Naive thymus-derived CD4-positive, alpha-beta T cell (primary cell): ENCODE measurements at regions of chr11 and their contacts with region 1.

Region 1: DNA sequence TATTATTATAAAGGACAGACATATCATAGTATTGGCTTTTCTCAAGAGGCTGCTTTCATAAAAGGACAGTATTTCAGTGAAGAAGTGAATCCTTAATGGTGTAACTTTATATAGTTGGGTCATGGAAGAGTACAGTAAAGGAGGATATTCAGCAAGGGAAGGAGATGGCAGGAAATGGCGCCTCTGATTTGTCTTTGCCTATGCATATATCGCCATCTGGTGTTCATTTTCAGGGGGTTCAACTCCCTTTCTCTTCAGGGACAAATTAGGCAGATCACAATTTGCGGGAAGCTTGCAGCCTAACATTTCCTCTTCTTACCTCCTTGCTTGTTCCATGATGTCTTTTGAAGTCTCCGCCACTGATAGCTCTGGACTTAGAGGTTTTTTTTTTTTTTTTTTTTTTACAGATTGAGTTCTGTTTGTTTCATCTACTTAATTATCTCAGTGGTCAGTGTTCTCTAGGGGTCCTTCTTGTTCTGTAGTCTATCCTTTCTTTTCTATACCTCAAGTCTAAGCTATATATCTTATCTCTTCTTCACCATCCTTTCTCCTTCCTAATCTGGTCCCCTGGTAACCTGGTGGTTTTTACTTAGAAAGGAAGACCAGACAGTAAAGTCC is 21.8 kb upstream of the RRM1 start:
- DNase-seq: peak in 7 of 9 donors; percentile 58 to 80 (median 75)
- ATAC-seq: peak; percentile 90
- H3K4me3 ChIP-seq: no peak overlapping the region
- H3K4me3 Mint-ChIP-seq: no peak overlapping the region
- H3K27ac ChIP-seq: peak overlapping the region; percentile 55
- H3K27ac Mint-ChIP-seq: peak overlapping the region; percentile 7 to 92 (median 85)
- H3K4me1 ChIP-seq: peaks cover 8 to 25% of the 10 kb centered on the region in 2 donors
- H3K4me1 Mint-ChIP-seq: peaks cover 32 to 78% (median 74%) of the 10 kb centered on the region in 7 donors
- H3K27me3 ChIP-seq: no peaks in the 10 kb centered on the region
- H3K27me3 Mint-ChIP-seq: no peaks in the 10 kb centered on the region

Region 2: DNA sequence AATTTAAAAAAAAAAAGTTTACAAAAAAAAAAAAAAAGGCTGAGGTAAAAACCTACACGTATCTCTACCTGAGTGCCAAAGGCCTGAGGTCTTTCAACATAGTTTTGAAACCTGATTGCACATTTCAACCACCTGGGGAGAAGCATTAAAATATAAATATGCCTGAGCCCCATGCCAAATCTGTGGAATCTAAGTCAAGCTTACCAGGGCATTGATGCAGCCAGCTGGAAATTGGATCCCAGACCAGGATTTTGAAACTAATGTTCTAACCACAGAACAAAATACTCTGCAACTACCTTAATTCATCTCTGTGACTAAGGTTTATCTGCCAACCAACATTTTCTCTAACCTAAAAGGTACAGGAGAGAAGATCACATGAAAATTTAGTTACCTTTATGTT is 362.8 kb before region 1 on chr11:
- CTCF ChIA-PET with region 1: no interaction called
- POLR2A ChIA-PET with region 1: no interaction called
- intact Hi-C with region 1: loop called in 1 of 2 experiments (anchors 5 kb)
- DNase-seq: no peak
- ATAC-seq: no peak
- H3K4me3 ChIP-seq: no peak overlapping the region
- H3K4me3 Mint-ChIP-seq: no peak overlapping the region
- H3K27ac ChIP-seq: no peak overlapping the region
- H3K27ac Mint-ChIP-seq: peak overlapping the region in 1 of 9 donors; percentile 13
- H3K4me1 ChIP-seq: no peaks in the 10 kb centered on the region
- H3K4me1 Mint-ChIP-seq: peaks cover 0 to 5% (median 0%) of the 10 kb centered on the region in 7 donors
- H3K27me3 ChIP-seq: no peaks in the 10 kb centered on the region
- H3K27me3 Mint-ChIP-seq: no peaks in the 10 kb centered on the region

Region 3: DNA sequence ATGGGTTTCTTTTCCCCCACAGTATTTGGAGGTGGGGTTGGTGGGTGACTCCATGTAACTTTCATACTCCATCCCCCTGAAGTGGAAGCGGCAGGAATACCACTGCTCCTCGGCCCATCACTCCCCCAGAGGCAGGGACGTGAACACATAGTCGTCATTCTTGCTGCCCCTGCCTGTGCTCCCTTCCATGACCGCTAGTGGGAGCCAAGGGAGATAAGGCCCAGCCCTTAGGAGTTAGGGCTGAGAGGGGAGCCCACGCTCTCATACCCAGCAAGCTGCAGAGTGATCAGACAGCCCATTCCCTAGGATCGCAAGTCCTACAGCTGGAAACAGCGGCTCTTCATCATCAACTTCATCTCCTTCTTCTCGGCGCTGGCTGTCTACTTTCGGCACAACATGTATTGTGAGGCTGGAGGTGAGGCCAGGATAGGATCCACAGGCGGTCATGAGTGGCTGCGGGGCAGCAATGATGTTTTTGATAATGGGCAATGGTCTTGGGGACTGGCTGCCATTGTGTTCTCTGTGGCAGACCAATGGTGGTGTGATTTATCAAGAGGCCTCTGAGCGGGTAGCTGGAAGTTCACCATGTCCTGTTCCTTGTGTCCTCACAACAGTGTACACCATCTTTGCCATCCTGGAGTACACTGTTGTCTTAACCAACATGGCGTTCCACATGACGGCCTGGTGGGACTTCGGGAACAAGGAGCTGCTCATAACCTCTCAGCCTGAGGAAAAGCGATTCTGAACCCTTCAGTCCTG is 247.9 kb before region 1 on chr11:
- CTCF ChIA-PET with region 1: interaction called, 7 read pairs
- POLR2A ChIA-PET with region 1: no interaction called
- intact Hi-C with region 1: loop called (anchors 1 kb)
- DNase-seq: peak; percentile 65 to 83 (median 77)
- ATAC-seq: peak; percentile 97
- H3K4me3 ChIP-seq: no peak overlapping the region
- H3K4me3 Mint-ChIP-seq: no peak overlapping the region
- H3K27ac ChIP-seq: peak overlapping the region; percentile 38
- H3K27ac Mint-ChIP-seq: peak overlapping the region; percentile 60 to 96 (median 87)
- H3K4me1 ChIP-seq: peaks cover 13 to 14% of the 10 kb centered on the region in 2 donors
- H3K4me1 Mint-ChIP-seq: peaks cover 15 to 46% (median 44%) of the 10 kb centered on the region in 7 donors
- H3K27me3 ChIP-seq: no peaks in the 10 kb centered on the region
- H3K27me3 Mint-ChIP-seq: no peaks in the 10 kb centered on the region

Region 4: GRCh38 chr11:3854977-3855807 is 217.6 kb before region 1 on chr11 and contains the start of gene STIM1:
- CTCF ChIA-PET with region 1: interaction called, 164 read pairs
- POLR2A ChIA-PET with region 1: interaction called, 110 read pairs
- intact Hi-C with region 1: loop called (anchors 1 kb)
- DNase-seq: peak; percentile 94 to 99 (median 97)
- ATAC-seq: peak; percentile 89
- H3K4me3 ChIP-seq: peak within 1 kb of the TSS; percentile 87
- H3K4me3 Mint-ChIP-seq: peak within 1 kb of the TSS; percentile 86 to 98 (median 92)
- H3K27ac ChIP-seq: peak within 1 kb of the TSS; percentile 92
- H3K27ac Mint-ChIP-seq: peak within 1 kb of the TSS; percentile 93 to 100 (median 98)
- H3K4me1 ChIP-seq: peaks cover 49 to 57% of the 10 kb centered on the region in 2 donors
- H3K4me1 Mint-ChIP-seq: peaks cover 53 to 72% (median 61%) of the 10 kb centered on the region in 7 donors
- H3K27me3 ChIP-seq: no peaks in the 10 kb centered on the region
- H3K27me3 Mint-ChIP-seq: peaks cover 0 to 2% (median 0%) of the 10 kb centered on the region in 5 donors
- total RNA-seq, gene STIM1: 95.6 to 117 (median 103) TPM

Region 5: DNA sequence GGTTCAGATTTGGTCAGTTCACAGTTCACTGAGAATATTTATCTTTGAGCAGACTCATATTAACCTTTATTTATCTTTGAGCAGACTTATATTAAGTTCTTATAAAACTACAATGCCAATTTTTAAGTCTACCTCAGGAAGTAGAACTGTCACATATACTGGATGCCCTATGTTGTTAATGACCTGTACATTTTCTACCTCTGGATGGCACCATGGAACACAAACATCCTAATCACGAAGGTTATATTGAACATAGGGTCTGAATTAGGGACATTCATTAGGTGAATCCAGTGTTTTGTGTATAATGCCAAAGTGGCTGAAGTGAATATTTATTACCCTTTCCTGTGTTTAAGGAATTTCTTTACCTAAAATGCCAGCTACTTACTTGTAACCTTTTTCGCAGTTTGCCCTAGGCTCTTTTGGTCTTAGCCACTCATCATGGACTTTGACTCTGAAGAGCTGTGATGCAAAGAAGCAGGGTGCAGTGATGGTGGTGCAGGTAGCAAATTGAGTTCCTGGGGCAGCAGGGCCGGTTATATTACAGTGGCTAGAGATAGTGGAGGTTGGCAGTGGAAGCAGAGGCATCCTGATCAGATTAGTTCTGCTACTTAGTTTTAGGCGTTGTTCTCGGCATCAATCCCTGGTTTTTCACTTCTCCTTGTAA is 145.5 kb before region 1 on chr11:
- CTCF ChIA-PET with region 1: interaction called, 15 read pairs
- POLR2A ChIA-PET with region 1: interaction called, 8 read pairs
- intact Hi-C with region 1: loop called in 1 of 2 experiments (anchors 1 kb)
- DNase-seq: no peak
- ATAC-seq: no peak
- H3K4me3 ChIP-seq: no peak overlapping the region
- H3K4me3 Mint-ChIP-seq: no peak overlapping the region
- H3K27ac ChIP-seq: no peak overlapping the region
- H3K27ac Mint-ChIP-seq: peak overlapping the region in 7 of 9 donors; percentile 10 to 86 (median 52)
- H3K4me1 ChIP-seq: peaks cover 0 to 4% of the 10 kb centered on the region in 2 donors
- H3K4me1 Mint-ChIP-seq: peaks cover 23 to 61% (median 58%) of the 10 kb centered on the region in 7 donors
- H3K27me3 ChIP-seq: no peaks in the 10 kb centered on the region
- H3K27me3 Mint-ChIP-seq: no peaks in the 10 kb centered on the region

Region 6: DNA sequence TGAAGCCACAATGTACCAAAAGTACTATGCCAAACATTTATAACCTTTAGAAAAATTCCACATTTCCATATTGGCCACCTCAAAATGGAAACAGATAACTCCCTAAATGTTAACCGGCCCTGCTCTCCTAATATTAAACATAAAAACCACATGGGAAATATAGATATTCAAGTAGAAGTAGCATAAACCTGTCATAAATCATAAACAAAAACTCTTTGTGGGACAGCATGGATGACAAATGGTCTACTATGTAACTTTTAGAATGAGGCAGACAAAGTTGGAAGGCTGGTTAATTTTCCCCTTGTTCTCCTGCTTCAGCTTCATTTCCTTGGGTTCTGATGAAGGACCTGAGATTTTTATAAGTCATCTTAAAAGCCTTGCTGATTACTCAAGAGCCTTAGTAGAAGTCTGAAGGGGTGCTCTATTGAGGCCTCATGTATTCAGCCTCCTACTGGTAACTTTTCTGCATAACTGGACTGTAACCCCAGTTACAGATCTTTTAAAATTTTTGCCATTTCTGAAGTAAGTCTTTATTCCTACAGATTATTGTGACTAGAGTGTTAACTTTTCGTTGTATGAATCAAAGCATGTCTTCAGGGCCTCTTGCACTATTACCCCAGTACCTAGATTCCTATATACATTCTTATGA is 100.9 kb before region 1 on chr11:
- CTCF ChIA-PET with region 1: interaction called, 9 read pairs
- POLR2A ChIA-PET with region 1: interaction called, 13 read pairs
- intact Hi-C with region 1: no loop called
- DNase-seq: no peak
- ATAC-seq: peak; percentile 41
- H3K4me3 ChIP-seq: no peak overlapping the region
- H3K4me3 Mint-ChIP-seq: peak overlapping the region in 1 of 10 donors; percentile 5
- H3K27ac ChIP-seq: no peak overlapping the region
- H3K27ac Mint-ChIP-seq: peak overlapping the region in 6 of 9 donors; percentile 39 to 88 (median 53)
- H3K4me1 ChIP-seq: peaks cover 10 to 28% of the 10 kb centered on the region in 2 donors
- H3K4me1 Mint-ChIP-seq: peaks cover 35 to 89% (median 81%) of the 10 kb centered on the region in 7 donors
- H3K27me3 ChIP-seq: no peaks in the 10 kb centered on the region
- H3K27me3 Mint-ChIP-seq: no peaks in the 10 kb centered on the region

Region 7: GRCh38 chr11:4084406-4085125 is 11.8 kb after region 1 on chr11:
- CTCF ChIA-PET with region 1: interaction called, 15 read pairs
- POLR2A ChIA-PET with region 1: interaction called, 4 read pairs
- intact Hi-C with region 1: no loop called
- DNase-seq: no peak
- ATAC-seq: no peak
- H3K4me3 ChIP-seq: no peak overlapping the region
- H3K4me3 Mint-ChIP-seq: no peak overlapping the region
- H3K27ac ChIP-seq: no peak overlapping the region
- H3K27ac Mint-ChIP-seq: peak overlapping the region in 8 of 9 donors; percentile 10 to 99 (median 63)
- H3K4me1 ChIP-seq: peaks cover 4 to 6% of the 10 kb centered on the region in 2 donors
- H3K4me1 Mint-ChIP-seq: peaks cover 19 to 38% (median 35%) of the 10 kb centered on the region in 7 donors
- H3K27me3 ChIP-seq: no peaks in the 10 kb centered on the region
- H3K27me3 Mint-ChIP-seq: no peaks in the 10 kb centered on the region